ENCODE measurements at regions of chr22 and their contacts with region 1.

Region 1: GRCh38 chr22:42868751-42869251 is 11.7 kb upstream of the ARFGAP3 start:
- DNase-seq: no peak
- ATAC-seq: no peak
- H3K4me3 Mint-ChIP-seq: no peak overlapping the region
- H3K27ac Mint-ChIP-seq: no peak overlapping the region
- H3K4me1 Mint-ChIP-seq: peaks cover 2% of the 10 kb centered on the region
- H3K27me3 Mint-ChIP-seq: no peaks in the 10 kb centered on the region

Region 2: DNA sequence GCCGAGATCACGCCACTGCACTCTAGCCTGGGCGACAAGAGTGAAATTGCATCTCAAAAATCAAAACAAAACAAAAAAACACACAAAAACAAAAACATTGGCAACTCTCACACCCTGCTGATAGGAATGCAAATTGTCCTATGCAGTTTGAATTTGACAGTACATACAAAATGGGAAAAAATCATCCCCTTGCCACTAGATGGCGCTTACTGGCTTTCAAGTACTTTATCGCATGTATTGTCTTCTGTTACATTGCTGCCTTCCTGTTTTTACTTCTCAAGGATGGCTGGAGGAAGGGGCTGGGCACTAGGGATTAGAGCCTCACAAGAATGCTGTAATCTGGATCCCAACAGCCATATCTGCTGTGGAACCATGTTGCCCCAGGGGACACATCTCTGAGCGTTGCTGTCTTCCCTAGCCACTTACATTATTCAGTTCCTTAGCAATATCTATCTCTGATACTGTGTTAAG is 88.7 kb before region 1 on chr22:
- CTCF ChIA-PET with region 1: interaction called, 20 read pairs
- DNase-seq: peak; percentile 60
- ATAC-seq: peak; percentile 71
- H3K4me3 Mint-ChIP-seq: no peak overlapping the region
- H3K27ac Mint-ChIP-seq: no peak overlapping the region
- H3K4me1 Mint-ChIP-seq: no peaks in the 10 kb centered on the region
- H3K27me3 Mint-ChIP-seq: peaks cover 4% of the 10 kb centered on the region

Region 3: GRCh38 chr22:42825796-42826195 is 43.0 kb before region 1 on chr22:
- CTCF ChIA-PET with region 1: interaction called, 13 read pairs
- DNase-seq: no peak
- ATAC-seq: no peak
- H3K4me3 Mint-ChIP-seq: no peak overlapping the region
- H3K27ac Mint-ChIP-seq: no peak overlapping the region
- H3K4me1 Mint-ChIP-seq: peaks cover 17% of the 10 kb centered on the region
- H3K27me3 Mint-ChIP-seq: no peaks in the 10 kb centered on the region

Region 4: DNA sequence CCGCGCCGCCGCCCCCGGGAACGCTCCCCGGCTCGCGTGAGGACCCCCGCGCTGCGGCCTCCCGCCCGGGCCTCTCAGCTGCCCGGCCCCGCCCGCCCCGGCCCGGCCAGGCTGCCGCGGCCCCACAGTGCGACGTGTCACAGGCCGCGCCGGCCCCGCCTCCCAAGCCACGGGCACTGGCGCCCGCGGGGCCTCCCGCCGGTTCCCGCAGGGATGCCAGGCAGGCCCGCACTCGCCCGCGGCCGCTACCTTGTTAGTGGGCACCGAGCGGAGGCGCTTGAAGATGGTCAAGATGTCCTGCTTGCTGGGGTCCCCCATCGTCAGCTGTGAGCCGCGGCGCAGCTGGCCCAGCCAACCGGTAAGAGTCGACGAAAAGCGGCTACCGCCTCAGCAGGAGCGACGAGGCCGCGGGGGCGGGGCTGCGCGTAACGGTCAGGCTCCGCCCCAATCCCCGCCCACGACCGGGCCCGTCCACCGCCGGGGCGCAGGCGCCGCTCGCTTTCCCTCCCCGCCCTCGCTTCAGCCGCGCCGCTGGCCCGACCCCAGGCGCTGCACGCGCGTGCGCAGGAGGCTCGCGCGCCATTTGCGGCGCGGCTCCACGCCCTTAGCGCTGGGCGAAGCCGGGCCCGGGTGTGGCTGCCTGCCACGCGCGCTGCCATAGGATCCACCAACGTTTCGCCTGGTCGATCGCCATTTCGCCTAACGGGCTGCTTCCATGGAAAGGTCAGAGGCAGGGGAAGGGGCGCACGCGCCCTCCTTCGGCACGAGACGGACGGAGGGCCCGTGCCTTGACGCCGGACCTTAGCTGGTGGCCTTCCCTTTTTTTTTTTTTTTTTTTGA is 11.7 kb before region 1 on chr22 and contains the start of gene ARFGAP3:
- CTCF ChIA-PET with region 1: interaction called, 66 read pairs
- DNase-seq: peak; percentile 94
- ATAC-seq: peak; percentile 94
- H3K4me3 Mint-ChIP-seq: peak within 1 kb of the TSS; percentile 84
- H3K27ac Mint-ChIP-seq: peak within 1 kb of the TSS; percentile 85
- H3K4me1 Mint-ChIP-seq: peaks cover 8% of the 10 kb centered on the region
- H3K27me3 Mint-ChIP-seq: no peaks in the 10 kb centered on the region
- total RNA-seq, gene ARFGAP3: 31.2 to 35.4 TPM

Region 5: DNA sequence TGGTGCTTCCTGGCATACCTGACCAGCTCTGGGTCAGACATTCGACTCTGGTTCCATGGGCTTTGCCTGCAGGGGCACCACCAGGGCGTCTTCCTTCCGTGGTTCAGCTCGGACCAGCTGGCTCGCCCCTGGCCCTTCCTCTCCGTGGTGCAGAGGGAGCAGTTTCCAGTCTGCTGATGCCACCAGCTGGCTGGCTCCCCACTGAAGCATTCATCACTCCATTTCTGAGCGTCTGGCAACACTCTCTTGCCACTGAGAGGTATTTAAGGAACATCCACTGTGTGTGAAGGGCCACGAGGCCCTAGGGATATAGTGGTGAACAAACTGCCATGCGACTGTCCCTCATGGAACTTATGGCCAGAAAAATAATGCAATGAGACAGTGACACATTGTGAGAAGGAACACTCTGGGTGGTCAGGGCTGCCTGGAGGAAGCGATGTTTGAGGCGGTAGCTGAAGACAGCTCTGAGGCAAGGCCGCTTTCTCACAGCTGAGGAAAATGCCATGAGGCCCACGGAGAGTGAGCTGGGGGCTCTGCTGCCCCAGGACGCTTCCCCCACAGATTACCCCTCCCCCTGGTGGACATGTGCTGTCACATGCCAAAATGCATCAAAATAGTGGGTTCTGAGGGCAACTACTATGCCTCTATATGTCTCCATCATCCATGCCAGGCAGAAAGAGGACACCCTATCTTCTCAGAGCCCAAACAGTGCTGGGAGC is 33.1 kb after region 1 on chr22:
- CTCF ChIA-PET with region 1: interaction called, 10 read pairs
- DNase-seq: no peak
- ATAC-seq: no peak
- H3K4me3 Mint-ChIP-seq: no peak overlapping the region
- H3K27ac Mint-ChIP-seq: no peak overlapping the region
- H3K4me1 Mint-ChIP-seq: peaks cover 4% of the 10 kb centered on the region
- H3K27me3 Mint-ChIP-seq: no peaks in the 10 kb centered on the region

Region 6: GRCh38 chr22:43035232-43035631 is 166.4 kb after region 1 on chr22:
- CTCF ChIA-PET with region 1: interaction called, 19 read pairs
- DNase-seq: no peak
- ATAC-seq: no peak
- H3K4me3 Mint-ChIP-seq: no peak overlapping the region
- H3K27ac Mint-ChIP-seq: no peak overlapping the region
- H3K4me1 Mint-ChIP-seq: peaks cover 5% of the 10 kb centered on the region
- H3K27me3 Mint-ChIP-seq: no peaks in the 10 kb centered on the region